ENCODE measurements at regions of chr1 and their contacts with region 1.

Region 1: GRCh38 chr1:48916130-48917069 is 139.7 kb upstream of the BEND5 start:
- DNase-seq: peak; percentile 63
- H3K4me3 ChIP-seq: peak overlapping the region in 1 of 2 experiments; percentile 20; a peak in 1 of 4 replicates
- H3K27ac ChIP-seq: peak overlapping the region; percentile 78 to 98
- H3K4me1 ChIP-seq: peaks cover 13 to 31% of the 10 kb centered on the region in 2 experiments
- H3K27me3 ChIP-seq: no peaks in the 10 kb centered on the region
- CTCF ChIP-seq: peak; percentile 74
- EP300 ChIP-seq: no peak
- RAD21 ChIP-seq: peak; percentile 91

Region 2: GRCh38 chr1:48846441-48846840 is 70.0 kb before region 1 on chr1:
- CTCF ChIA-PET with region 1: no interaction called
- POLR2A ChIA-PET with region 1: no interaction called
- DNase-seq: no peak
- H3K4me3 ChIP-seq: no peak overlapping the region
- H3K27ac ChIP-seq: no peak overlapping the region
- H3K4me1 ChIP-seq: peaks cover 3 to 6% of the 10 kb centered on the region in 2 experiments; a peak in 2 of 4 replicates
- H3K27me3 ChIP-seq: no peaks in the 10 kb centered on the region
- CTCF ChIP-seq: no peak
- EP300 ChIP-seq: no peak
- RAD21 ChIP-seq: no peak

Region 3: GRCh38 chr1:48889082-48889481 is 27.3 kb before region 1 on chr1:
- CTCF ChIA-PET with region 1: interaction called, 10 read pairs
- POLR2A ChIA-PET with region 1: no interaction called
- DNase-seq: peak; percentile 72
- H3K4me3 ChIP-seq: no peak overlapping the region
- H3K27ac ChIP-seq: peak overlapping the region in 1 of 2 experiments; percentile 98; a peak in 2 of 4 replicates
- H3K4me1 ChIP-seq: peaks cover 0 to 31% of the 10 kb centered on the region in 2 experiments; a peak in 2 of 4 replicates
- H3K27me3 ChIP-seq: no peaks in the 10 kb centered on the region
- CTCF ChIP-seq: no peak
- EP300 ChIP-seq: peak in 1 of 2 experiments; percentile 94; a peak in 2 of 4 replicates
- RAD21 ChIP-seq: peak; percentile 26; the same call in 1 of the 2 replicates

Region 4: DNA sequence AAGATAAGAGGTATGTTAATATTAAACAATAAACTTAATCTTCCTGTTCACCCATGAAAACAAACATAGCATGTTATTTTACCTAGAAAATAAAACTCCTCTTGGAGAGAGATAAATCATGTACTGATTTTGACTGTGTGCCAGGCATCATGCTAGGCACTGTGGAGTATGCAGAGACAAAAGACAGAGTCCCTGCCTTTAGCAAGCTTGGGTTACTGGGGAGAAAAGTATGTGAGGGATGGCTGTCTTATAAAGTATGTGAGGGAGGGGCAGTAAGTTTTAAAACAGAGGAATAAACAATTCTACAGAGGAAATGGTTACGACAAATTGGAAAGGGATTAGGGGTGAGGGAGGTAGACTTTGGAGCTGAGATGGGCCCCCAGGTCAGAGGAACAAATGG is 10.2 kb before region 1 on chr1:
- CTCF ChIA-PET with region 1: interaction called, 27 read pairs
- POLR2A ChIA-PET with region 1: no interaction called
- DNase-seq: no peak
- H3K4me3 ChIP-seq: no peak overlapping the region
- H3K27ac ChIP-seq: no peak overlapping the region
- H3K4me1 ChIP-seq: peaks cover 4 to 5% of the 10 kb centered on the region in 2 experiments; a peak in 2 of 4 replicates
- H3K27me3 ChIP-seq: no peaks in the 10 kb centered on the region
- CTCF ChIP-seq: no peak
- EP300 ChIP-seq: no peak
- RAD21 ChIP-seq: no peak

Region 5: GRCh38 chr1:49052102-49052501 is 135.7 kb after region 1 on chr1:
- CTCF ChIA-PET with region 1: interaction called, 11 read pairs
- POLR2A ChIA-PET with region 1: interaction called, 5 read pairs
- DNase-seq: peak; percentile 45
- H3K4me3 ChIP-seq: no peak overlapping the region
- H3K27ac ChIP-seq: peak overlapping the region; percentile 19 to 100; a peak in 3 of 4 replicates
- H3K4me1 ChIP-seq: peaks cover 19 to 51% of the 10 kb centered on the region in 2 experiments
- H3K27me3 ChIP-seq: no peaks in the 10 kb centered on the region
- CTCF ChIP-seq: no peak
- EP300 ChIP-seq: peak in 1 of 2 experiments; percentile 53; a peak in 2 of 4 replicates
- RAD21 ChIP-seq: no peak

Region 6: GRCh38 chr1:49541096-49541752 is 624.8 kb after region 1 on chr1:
- CTCF ChIA-PET with region 1: no interaction called
- POLR2A ChIA-PET with region 1: no interaction called
- DNase-seq: no peak
- H3K4me3 ChIP-seq: no peak overlapping the region
- H3K27ac ChIP-seq: no peak overlapping the region
- H3K4me1 ChIP-seq: no peaks in the 10 kb centered on the region
- H3K27me3 ChIP-seq: no peaks in the 10 kb centered on the region
- CTCF ChIP-seq: no peak
- EP300 ChIP-seq: no peak
- RAD21 ChIP-seq: no peak

Region 7: GRCh38 chr1:50332941-50333594 is 1416.7 kb after region 1 on chr1:
- CTCF ChIA-PET with region 1: interaction called, 35 read pairs
- POLR2A ChIA-PET with region 1: no interaction called
- DNase-seq: peak; percentile 90
- H3K4me3 ChIP-seq: peak overlapping the region; percentile 23 to 25; a peak in 2 of 4 replicates
- H3K27ac ChIP-seq: peak overlapping the region in 1 of 2 experiments; percentile 78; a peak in 2 of 4 replicates
- H3K4me1 ChIP-seq: peaks cover 0 to 57% of the 10 kb centered on the region in 2 experiments; a peak in 2 of 4 replicates
- H3K27me3 ChIP-seq: no peaks in the 10 kb centered on the region
- CTCF ChIP-seq: peak; percentile 69
- EP300 ChIP-seq: no peak; a peak in 1 of 4 replicates
- RAD21 ChIP-seq: peak; percentile 92

Region 8: GRCh38 chr1:50348449-50349241 is 1432.2 kb after region 1 on chr1:
- CTCF ChIA-PET with region 1: interaction called, 42 read pairs
- POLR2A ChIA-PET with region 1: interaction called, 3 read pairs
- DNase-seq: peak; percentile 77
- H3K4me3 ChIP-seq: no peak overlapping the region
- H3K27ac ChIP-seq: peak overlapping the region in 1 of 2 experiments; percentile 48; a peak in 1 of 4 replicates
- H3K4me1 ChIP-seq: peaks cover 0 to 23% of the 10 kb centered on the region in 2 experiments; a peak in 2 of 4 replicates
- H3K27me3 ChIP-seq: no peaks in the 10 kb centered on the region
- CTCF ChIP-seq: peak; percentile 82
- EP300 ChIP-seq: peak in 1 of 2 experiments; percentile 30; a peak in 1 of 4 replicates
- RAD21 ChIP-seq: peak; percentile 99

Measured in SK-N-SH (cell line).